ENCODE measurements at regions of chr17 and their contacts with region 1.

Region 1: GRCh38 chr17:79065105-79065670 is 9.4 kb upstream of the ENGASE start:
- DNase-seq: peak; percentile 62 to 77 (median 64)
- ATAC-seq: peak; percentile 86
- H3K4me3 ChIP-seq: no peak overlapping the region
- H3K27ac ChIP-seq: no peak overlapping the region
- H3K4me1 ChIP-seq: no peaks in the 10 kb centered on the region
- H3K27me3 ChIP-seq: peaks cover 8 to 15% of the 10 kb centered on the region in 2 experiments; a peak in 4 of 5 replicates
- CTCF ChIP-seq: peak; percentile 64 to 90 (median 73)
- EP300 ChIP-seq: no peak
- POLR2A ChIP-seq: no peak
- RAD21 ChIP-seq: peak; percentile 59 to 77

Region 2: DNA sequence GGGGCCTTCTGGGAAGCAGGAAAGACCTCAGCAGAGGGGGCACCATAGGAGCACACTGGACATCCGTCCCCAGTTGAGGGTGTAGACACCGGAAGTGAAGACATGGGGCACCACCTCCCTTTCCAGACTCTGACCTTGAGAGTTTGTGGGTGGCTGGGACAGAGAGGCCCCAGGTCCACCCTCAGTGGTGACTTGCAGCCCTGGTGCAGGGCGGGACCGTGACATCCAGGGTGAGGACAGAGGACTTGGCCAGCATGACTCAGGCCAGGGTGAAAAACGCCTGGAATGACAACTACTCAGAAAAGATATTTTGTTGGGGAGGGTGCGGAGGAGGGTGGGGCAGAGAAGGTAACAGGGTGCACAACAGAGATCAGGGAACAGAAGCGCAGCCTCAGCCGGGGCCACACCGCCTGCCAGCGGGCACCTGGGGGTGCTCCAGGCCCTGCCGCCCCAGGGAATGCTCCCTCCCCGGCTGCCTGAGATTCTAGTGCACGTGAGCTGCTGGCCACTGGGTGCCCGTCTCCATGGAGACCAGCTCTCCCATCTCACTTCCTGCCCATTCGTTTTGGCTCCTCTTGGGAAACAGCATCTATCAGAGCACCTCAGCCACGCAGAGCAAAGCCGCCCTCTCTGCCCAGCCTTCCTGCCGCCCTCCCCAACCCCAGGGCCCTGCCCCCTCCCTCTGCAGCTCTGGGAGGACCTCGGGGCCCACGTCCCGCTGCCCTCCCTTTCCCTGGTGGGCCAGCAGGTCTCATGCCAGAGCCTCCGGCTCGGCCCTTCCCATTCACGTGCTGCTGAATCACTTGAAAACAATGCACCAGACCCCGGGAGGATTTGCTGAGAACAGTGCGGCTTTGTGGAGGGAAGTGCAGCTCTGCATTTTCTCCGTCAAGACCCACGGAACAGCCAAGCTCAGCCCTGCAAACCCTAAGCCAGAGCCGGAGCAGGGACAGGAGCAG is 181.7 kb before region 1 on chr17:
- CTCF ChIA-PET with region 1: no interaction called
- POLR2A ChIA-PET with region 1: no interaction called
- in situ Hi-C with region 1: no loop called
- intact Hi-C with region 1: no loop called
- DNase-seq: peak; percentile 78 to 85 (median 82)
- ATAC-seq: peak; percentile 90
- H3K4me3 ChIP-seq: no peak overlapping the region
- H3K27ac ChIP-seq: peak overlapping the region; percentile 68; the same call in 2 of the 3 replicates
- H3K4me1 ChIP-seq: peaks cover 16 to 34% of the 10 kb centered on the region in 2 experiments
- H3K27me3 ChIP-seq: peaks cover 24 to 47% of the 10 kb centered on the region in 2 experiments; a peak in 4 of 5 replicates
- CTCF ChIP-seq: no peak
- EP300 ChIP-seq: peak; percentile 45; the same call in 1 of the 2 replicates
- POLR2A ChIP-seq: no peak
- RAD21 ChIP-seq: no peak

Region 3: GRCh38 chr17:79019632-79020584 is 45.3 kb before region 1 on chr17:
- CTCF ChIA-PET with region 1: no interaction called
- POLR2A ChIA-PET with region 1: no interaction called
- in situ Hi-C with region 1: no loop called
- intact Hi-C with region 1: no loop called
- DNase-seq: peak; percentile 48 to 62 (median 53)
- ATAC-seq: peak; percentile 83
- H3K4me3 ChIP-seq: no peak overlapping the region
- H3K27ac ChIP-seq: no peak overlapping the region
- H3K4me1 ChIP-seq: peaks cover 0 to 13% of the 10 kb centered on the region in 2 experiments; a peak in 2 of 5 replicates
- H3K27me3 ChIP-seq: peaks cover 27 to 36% of the 10 kb centered on the region in 2 experiments
- CTCF ChIP-seq: peak; percentile 57 to 84 (median 73); a peak in 5 of 6 replicates
- EP300 ChIP-seq: 0 out of 2 replicates have a peak, but pooled peaks have one; percentile 16
- POLR2A ChIP-seq: no peak
- RAD21 ChIP-seq: peak; percentile 59 to 75

Region 4: GRCh38 chr17:79082311-79083190 is 17.4 kb after region 1 on chr17:
- CTCF ChIA-PET with region 1: interaction called, 15 read pairs
- POLR2A ChIA-PET with region 1: interaction called, 5 read pairs
- in situ Hi-C with region 1: no loop called
- intact Hi-C with region 1: loop called (anchors 2 kb)
- DNase-seq: peak; percentile 66 to 84 (median 82)
- ATAC-seq: peak; percentile 91
- H3K4me3 ChIP-seq: no peak overlapping the region
- H3K27ac ChIP-seq: no peak overlapping the region
- H3K4me1 ChIP-seq: peaks cover 0 to 30% of the 10 kb centered on the region in 2 experiments; a peak in 2 of 5 replicates
- H3K27me3 ChIP-seq: no peaks in the 10 kb centered on the region
- CTCF ChIP-seq: peak; percentile 75 to 90 (median 88)
- EP300 ChIP-seq: no peak
- POLR2A ChIP-seq: no peak
- RAD21 ChIP-seq: peak; percentile 33 to 70

Region 5: GRCh38 chr17:79137015-79137788 is 72.0 kb after region 1 on chr17:
- CTCF ChIA-PET with region 1: no interaction called
- POLR2A ChIA-PET with region 1: no interaction called
- in situ Hi-C with region 1: no loop called
- intact Hi-C with region 1: no loop called
- DNase-seq: no peak
- ATAC-seq: no peak
- H3K4me3 ChIP-seq: no peak overlapping the region
- H3K27ac ChIP-seq: no peak overlapping the region
- H3K4me1 ChIP-seq: peaks cover 0 to 6% of the 10 kb centered on the region in 2 experiments; a peak in 1 of 5 replicates
- H3K27me3 ChIP-seq: peaks cover 14 to 63% of the 10 kb centered on the region in 2 experiments; a peak in 4 of 5 replicates
- CTCF ChIP-seq: no peak
- EP300 ChIP-seq: no peak
- POLR2A ChIP-seq: no peak
- RAD21 ChIP-seq: no peak

Measured in K562 (cell line).